Right lobe of liver (tissue), 6 donors: ENCODE measurements at regions of chr2 and their contacts with region 1.

Region 1: DNA sequence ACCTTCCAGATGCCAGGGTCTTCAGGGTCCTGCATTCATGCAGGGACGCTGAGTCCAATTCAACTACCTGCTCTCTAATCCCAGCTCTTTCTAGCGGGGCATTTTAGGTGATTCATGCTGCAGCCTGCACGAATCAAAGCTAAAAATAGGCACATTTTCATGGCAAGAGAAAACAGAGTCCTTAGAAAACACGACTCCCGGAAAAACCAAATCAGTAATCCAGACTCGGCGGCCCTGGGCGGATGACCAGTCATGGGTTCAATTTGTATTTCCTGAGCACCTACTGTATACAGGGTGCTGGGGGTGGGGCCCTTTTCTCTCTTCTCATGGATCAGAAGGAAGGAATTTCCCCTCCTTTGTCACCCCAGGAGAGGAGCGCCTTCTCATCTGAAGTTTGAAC is 64.4 kb downstream of the LONRF2 start:
- DNase-seq: no peak
- ATAC-seq: no peak
- H3K4me3 ChIP-seq: no peak overlapping the region
- H3K27ac ChIP-seq: no peak overlapping the region
- H3K4me1 ChIP-seq: no peaks in the 10 kb centered on the region
- H3K27me3 ChIP-seq: no peaks in the 10 kb centered on the region
- CTCF ChIP-seq: no peak
- POLR2A ChIP-seq: no peak

Region 2: GRCh38 chr2:99559075-99559662 is 698.8 kb before region 1 on chr2:
- intact Hi-C with region 1: loop called in 1 of 2 experiments (anchors 10 kb)
- DNase-seq: peak; percentile 85 to 88 (median 87)
- ATAC-seq: peak; percentile 98 to 99 (median 98)
- H3K4me3 ChIP-seq: no peak overlapping the region
- H3K27ac ChIP-seq: no peak overlapping the region
- H3K4me1 ChIP-seq: no peaks in the 10 kb centered on the region
- H3K27me3 ChIP-seq: no peaks in the 10 kb centered on the region
- CTCF ChIP-seq: peak; percentile 94 to 99 (median 98)
- POLR2A ChIP-seq: no peak

Region 3: GRCh38 chr2:100376823-100377222 is 118.9 kb after region 1 on chr2:
- intact Hi-C with region 1: no loop called
- DNase-seq: no peak
- ATAC-seq: no peak
- H3K4me3 ChIP-seq: no peak overlapping the region
- H3K27ac ChIP-seq: no peak overlapping the region
- H3K4me1 ChIP-seq: no peaks in the 10 kb centered on the region
- H3K27me3 ChIP-seq: no peaks in the 10 kb centered on the region
- CTCF ChIP-seq: no peak
- POLR2A ChIP-seq: no peak